A673 (cell line): ENCODE measurements at regions of chrX and their contacts with region 1.

Region 1: DNA sequence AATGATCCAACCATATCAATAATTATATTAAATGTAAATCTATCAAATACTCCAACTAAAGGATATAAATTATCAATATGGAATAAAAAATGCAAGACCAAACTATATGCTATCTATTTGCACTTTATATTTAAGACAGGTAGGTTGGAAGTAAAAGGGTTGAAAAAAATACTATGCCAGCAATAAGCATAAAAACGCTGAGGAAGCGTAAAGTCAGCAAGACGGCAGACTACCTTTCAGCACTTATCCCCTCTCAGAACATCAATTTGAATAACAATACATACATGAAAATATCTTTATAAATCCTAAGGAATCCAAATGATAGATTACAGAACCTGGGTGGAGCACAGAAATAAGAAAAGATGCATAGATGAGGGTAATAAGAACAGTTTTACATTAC is 14.0 kb upstream of the GABRA3 start:
- DNase-seq: no peak
- H3K4me3 ChIP-seq: no peak overlapping the region
- H3K27ac ChIP-seq: no peak overlapping the region
- H3K4me1 ChIP-seq: no peaks in the 10 kb centered on the region
- H3K27me3 ChIP-seq: no peaks in the 10 kb centered on the region
- CTCF ChIP-seq: no peak

Region 2: GRCh38 chrX:152313529-152314302 is 151.4 kb before region 1 on chrX:
- CTCF ChIA-PET with region 1: no interaction called
- POLR2A ChIA-PET with region 1: no interaction called
- intact Hi-C with region 1: no loop called
- DNase-seq: no peak
- H3K4me3 ChIP-seq: no peak overlapping the region
- H3K27ac ChIP-seq: no peak overlapping the region
- H3K4me1 ChIP-seq: no peaks in the 10 kb centered on the region
- H3K27me3 ChIP-seq: no peaks in the 10 kb centered on the region
- CTCF ChIP-seq: no peak

Region 3: DNA sequence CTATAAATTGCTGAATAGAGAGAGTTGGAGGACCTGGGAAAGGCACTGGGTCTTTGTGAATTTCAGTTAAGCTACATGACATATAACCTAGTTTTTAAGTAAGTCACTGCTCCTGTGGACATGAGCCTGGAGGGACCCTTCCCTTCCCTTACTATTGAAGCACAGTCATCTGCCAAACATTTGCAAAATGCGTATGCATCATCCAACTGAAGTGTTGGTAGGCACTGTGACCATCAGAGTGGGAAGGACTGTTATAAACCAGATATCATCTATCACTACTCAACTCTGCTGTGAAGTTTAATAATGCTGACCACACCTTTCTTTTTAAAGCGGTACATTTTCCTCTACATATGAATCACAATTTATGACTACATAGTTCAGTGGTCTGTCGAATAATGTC is 19.2 kb before region 1 on chrX:
- CTCF ChIA-PET with region 1: no interaction called
- POLR2A ChIA-PET with region 1: no interaction called
- intact Hi-C with region 1: loop called (anchors 2 kb)
- DNase-seq: no peak
- H3K4me3 ChIP-seq: no peak overlapping the region
- H3K27ac ChIP-seq: no peak overlapping the region
- H3K4me1 ChIP-seq: no peaks in the 10 kb centered on the region
- H3K27me3 ChIP-seq: no peaks in the 10 kb centered on the region
- CTCF ChIP-seq: no peak

Region 4: DNA sequence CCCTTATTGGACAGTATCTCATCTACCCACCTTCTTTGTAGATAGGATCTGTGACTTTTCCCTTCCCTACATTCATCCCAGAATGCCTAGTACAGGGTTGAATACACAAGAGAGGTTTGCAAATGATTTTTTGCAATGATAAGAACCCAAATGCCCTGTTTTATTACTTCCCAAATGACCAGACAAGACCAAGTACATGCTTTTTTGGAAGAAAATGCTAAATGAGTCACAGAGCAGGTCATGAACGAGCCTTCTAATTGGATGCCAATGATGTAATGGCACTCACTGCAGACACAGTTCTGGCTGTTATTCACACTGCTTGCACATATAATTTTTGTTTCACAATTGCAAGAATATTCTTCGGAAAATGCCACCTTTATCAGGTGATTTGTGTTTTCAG is 154.8 kb after region 1 on chrX:
- CTCF ChIA-PET with region 1: no interaction called
- POLR2A ChIA-PET with region 1: no interaction called
- intact Hi-C with region 1: no loop called
- DNase-seq: no peak
- H3K4me3 ChIP-seq: no peak overlapping the region
- H3K27ac ChIP-seq: no peak overlapping the region
- H3K4me1 ChIP-seq: no peaks in the 10 kb centered on the region
- H3K27me3 ChIP-seq: no peaks in the 10 kb centered on the region
- CTCF ChIP-seq: no peak